ENCODE measurements at regions of chr1 and their contacts with region 1.

Region 1: DNA sequence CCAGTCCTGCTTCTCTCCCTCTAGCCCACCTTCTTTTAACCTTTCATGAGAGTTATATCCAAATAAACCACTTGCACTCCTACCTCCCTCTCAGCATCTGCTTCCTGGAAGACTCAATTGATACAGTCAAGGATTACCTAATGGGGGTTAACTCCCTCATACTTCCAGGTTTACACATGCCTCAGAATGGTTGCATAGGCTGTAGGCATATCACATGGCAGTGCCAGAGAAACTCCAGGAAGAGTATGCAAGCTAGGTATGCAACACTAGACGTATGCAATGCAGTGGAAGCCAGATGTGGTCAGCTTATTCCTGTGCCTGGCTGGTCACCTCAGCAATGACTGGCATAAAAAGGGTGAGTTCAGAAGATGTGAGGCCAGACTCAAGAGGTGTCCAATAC is 32.7 kb upstream of the VANGL1 start:
- DNase-seq: no peak
- H3K4me3 ChIP-seq: no peak overlapping the region
- H3K27me3 ChIP-seq: peaks cover 6% of the 10 kb centered on the region
- CTCF ChIP-seq: no peak

Region 2: GRCh38 chr1:115492880-115493279 is 116.1 kb before region 1 on chr1:
- CTCF ChIA-PET with region 1: no interaction called
- POLR2A ChIA-PET with region 1: no interaction called
- DNase-seq: no peak
- H3K4me3 ChIP-seq: no peak overlapping the region
- H3K27me3 ChIP-seq: no peaks in the 10 kb centered on the region
- CTCF ChIP-seq: no peak

Region 3: GRCh38 chr1:115595279-115596079 is 13.5 kb before region 1 on chr1:
- CTCF ChIA-PET with region 1: interaction called, 11 read pairs
- POLR2A ChIA-PET with region 1: no interaction called
- DNase-seq: peak; percentile 63
- H3K4me3 ChIP-seq: no peak overlapping the region
- H3K27me3 ChIP-seq: no peaks in the 10 kb centered on the region
- CTCF ChIP-seq: peak; percentile 96

Region 4: DNA sequence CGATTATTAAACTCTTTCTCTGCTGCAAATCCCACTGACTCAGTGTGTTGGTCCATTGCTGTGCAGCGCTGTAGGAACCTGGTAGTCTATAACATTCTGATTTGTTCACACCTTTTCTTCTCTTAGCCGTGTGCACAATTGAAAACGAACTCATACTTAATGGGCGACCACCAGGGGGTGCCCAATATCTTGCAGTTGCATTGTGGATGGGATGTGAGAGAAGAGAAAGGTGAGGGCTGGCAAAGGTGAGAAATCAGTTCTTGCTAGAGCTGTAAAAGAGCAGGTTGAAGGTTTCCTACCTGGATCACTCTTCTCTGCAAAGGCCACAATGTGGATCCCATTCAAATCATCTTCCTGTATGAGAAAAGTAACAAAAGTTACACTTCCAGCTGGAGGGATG is 108.5 kb after region 1 on chr1:
- CTCF ChIA-PET with region 1: interaction called, 11 read pairs
- POLR2A ChIA-PET with region 1: no interaction called
- DNase-seq: no peak
- H3K4me3 ChIP-seq: no peak overlapping the region
- H3K27me3 ChIP-seq: peaks cover 9% of the 10 kb centered on the region; the same call in 1 of the 2 replicates
- CTCF ChIP-seq: peak; percentile 53

Region 5: DNA sequence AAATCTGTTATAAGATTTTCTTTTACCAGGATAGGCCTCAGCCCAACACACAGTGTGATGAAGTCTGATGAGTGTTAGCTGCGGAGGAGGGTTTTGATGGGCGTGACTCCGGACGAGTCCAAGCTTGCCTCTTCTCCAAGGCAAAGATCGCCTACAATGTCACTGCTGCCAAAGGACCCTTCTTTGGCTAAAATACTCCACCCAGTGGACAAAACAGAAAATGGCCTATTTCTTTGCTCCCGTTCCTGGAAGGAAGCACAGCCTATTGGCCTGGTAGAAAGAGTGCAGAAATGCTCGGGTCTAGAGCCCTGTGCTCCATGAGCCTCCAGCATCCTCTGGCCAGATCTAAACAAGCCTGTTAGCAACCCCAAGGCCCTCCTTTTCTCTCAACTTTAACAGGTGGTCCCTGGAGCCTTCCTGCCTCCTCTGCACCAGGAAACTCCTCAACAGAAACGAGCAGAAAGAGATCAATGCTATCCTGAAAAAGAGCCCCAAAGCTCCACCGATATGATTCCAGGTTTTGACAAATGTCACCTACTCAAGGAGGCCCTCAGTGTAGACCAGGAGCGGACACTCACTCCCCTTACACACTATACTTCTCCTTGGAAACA is 162.9 kb after region 1 on chr1:
- CTCF ChIA-PET with region 1: interaction called, 137 read pairs
- POLR2A ChIA-PET with region 1: no interaction called
- DNase-seq: peak; percentile 37
- H3K4me3 ChIP-seq: no peak overlapping the region
- H3K27me3 ChIP-seq: peaks cover 4% of the 10 kb centered on the region
- CTCF ChIP-seq: peak; percentile 75

Measured in BJ (cell line).